Breast epithelium (tissue), 4 donors: ENCODE measurements at regions of chr4 and their contacts with region 1.

Region 1: DNA sequence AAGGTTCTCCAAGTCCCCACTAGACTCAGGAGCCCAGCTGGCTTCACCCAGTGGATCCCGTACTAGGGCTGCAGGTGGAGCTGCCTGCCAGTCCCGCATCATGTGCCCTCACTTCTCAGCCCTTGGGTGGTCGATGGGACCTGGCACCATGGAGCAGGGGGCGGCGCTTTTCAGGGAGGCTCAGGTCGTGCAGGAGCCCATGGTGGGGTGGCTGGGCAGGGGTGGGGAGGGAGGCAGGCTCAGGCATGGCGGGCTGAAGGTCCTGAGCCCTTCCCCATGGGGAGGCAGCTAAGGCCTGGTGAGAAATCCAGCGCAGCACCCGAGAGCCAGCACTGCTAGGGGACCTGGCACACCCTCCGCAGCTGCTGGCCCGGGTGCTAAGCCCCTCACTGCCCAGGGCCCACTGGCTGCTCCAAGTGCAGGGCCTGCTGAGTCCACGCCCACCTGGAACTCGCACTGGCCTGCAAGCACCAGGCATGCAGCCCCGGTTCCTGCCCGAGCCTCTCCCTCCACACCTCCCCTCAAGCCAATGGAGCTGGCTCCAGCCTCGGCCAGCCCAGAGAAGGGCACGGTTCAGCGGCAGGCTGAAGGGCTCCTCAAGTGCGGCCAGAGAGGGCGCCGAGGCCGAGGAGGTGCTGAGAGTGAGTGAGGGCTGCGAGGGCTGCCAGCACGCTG is 72.7 kb upstream of the SLIT2 start:
- DNase-seq: no peak
- H3K4me3 ChIP-seq: no peak overlapping the region
- H3K27ac ChIP-seq: no peak overlapping the region
- H3K4me1 ChIP-seq: no peaks in the 10 kb centered on the region
- H3K27me3 ChIP-seq: no peaks in the 10 kb centered on the region
- CTCF ChIP-seq: no peak
- POLR2A ChIP-seq: no peak

Region 2: DNA sequence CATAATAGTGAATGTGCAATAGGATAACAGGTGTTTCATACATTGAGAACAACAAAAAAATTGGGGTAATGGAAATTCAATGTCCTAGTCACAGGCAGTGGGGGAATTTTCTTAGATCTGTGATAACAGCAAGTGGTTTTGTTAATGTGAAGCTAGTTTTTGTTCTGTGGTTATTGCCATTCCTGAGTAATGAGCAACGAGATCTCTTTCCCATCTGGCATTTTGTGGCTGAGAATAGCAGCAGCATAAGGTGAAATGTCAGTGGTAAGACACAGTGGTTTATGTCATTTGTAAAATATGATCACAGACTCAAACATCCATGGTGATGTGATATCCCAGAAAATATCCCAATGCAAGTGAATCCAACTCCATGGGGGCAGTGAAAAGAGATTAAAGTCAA is 1272.0 kb after region 1 on chr4:
- intact Hi-C with region 1: loop called (anchors 5 kb)
- DNase-seq: no peak
- H3K4me3 ChIP-seq: no peak overlapping the region
- H3K27ac ChIP-seq: no peak overlapping the region
- H3K4me1 ChIP-seq: no peaks in the 10 kb centered on the region
- H3K27me3 ChIP-seq: no peaks in the 10 kb centered on the region
- CTCF ChIP-seq: no peak
- POLR2A ChIP-seq: no peak